Activated T-helper 1 cell treated with anti-CD3 and anti-CD28 coated beads, Interleukin-12 subunit alpha, Interleukin-12 subunit beta, Interleukin-2, Interleukin-4 antibody, amounts not matched to agents 30 ng/mL and 10 ng/mL and 1 ng/mL, durations not matched to agents 14 hours and 24 hours and 36 hours (primary cell): ENCODE measurements at regions of chr5 and their contacts with region 1.

Region 1: GRCh38 chr5:132426525-132427138 is 57.1 kb downstream of the SLC22A5 start:
- DNase-seq: peak; percentile 67
- H3K4me3 Mint-ChIP-seq: peak overlapping the region; percentile 72
- H3K27ac Mint-ChIP-seq: peak overlapping the region; percentile 98
- H3K4me1 Mint-ChIP-seq: peaks cover 97% of the 10 kb centered on the region
- H3K27me3 Mint-ChIP-seq: no peaks in the 10 kb centered on the region

Region 2: DNA sequence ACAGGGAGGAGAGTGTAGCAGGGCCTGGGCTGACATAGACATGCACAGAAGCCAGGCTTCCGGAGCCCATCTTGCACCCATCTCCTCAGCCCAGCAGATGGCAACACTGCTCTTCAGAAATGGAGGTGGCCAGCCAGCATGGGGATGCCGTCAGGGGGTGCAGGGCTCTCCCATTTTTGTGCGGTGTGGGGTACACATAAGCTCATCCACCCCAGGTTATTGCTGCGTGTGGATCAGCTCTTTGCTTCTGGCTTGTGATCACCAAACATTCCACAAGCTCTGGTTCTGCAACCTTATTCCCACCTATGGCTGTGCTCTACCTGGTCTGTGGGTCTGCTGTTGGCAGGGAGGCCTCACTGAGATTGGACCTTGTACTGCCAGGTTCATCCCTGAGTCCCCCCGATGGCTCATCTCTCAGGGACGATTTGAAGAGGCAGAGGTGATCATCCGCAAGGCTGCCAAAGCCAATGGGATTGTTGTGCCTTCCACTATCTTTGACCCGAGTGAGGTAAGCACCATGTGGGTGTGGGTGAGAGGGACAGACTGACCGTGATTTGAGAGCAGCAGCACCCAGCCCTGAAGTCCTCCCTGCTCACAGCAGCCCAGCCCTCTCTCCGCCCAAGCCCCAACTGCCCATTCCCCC is 39.9 kb before region 1 on chr5:
- intact Hi-C with region 1: no loop called
- DNase-seq: peak; percentile 72
- H3K4me3 Mint-ChIP-seq: no peak overlapping the region
- H3K27ac Mint-ChIP-seq: peak overlapping the region; percentile 54
- H3K4me1 Mint-ChIP-seq: peaks cover 61% of the 10 kb centered on the region
- H3K27me3 Mint-ChIP-seq: peaks cover 3% of the 10 kb centered on the region

Region 3: GRCh38 chr5:132410451-132411381 is 15.9 kb before region 1 on chr5:
- intact Hi-C with region 1: loop called (anchors 1 kb)
- DNase-seq: peak; percentile 90
- H3K4me3 Mint-ChIP-seq: peak overlapping the region; percentile 99
- H3K27ac Mint-ChIP-seq: peak overlapping the region; percentile 100
- H3K4me1 Mint-ChIP-seq: peaks cover 81% of the 10 kb centered on the region
- H3K27me3 Mint-ChIP-seq: no peaks in the 10 kb centered on the region

Region 4: DNA sequence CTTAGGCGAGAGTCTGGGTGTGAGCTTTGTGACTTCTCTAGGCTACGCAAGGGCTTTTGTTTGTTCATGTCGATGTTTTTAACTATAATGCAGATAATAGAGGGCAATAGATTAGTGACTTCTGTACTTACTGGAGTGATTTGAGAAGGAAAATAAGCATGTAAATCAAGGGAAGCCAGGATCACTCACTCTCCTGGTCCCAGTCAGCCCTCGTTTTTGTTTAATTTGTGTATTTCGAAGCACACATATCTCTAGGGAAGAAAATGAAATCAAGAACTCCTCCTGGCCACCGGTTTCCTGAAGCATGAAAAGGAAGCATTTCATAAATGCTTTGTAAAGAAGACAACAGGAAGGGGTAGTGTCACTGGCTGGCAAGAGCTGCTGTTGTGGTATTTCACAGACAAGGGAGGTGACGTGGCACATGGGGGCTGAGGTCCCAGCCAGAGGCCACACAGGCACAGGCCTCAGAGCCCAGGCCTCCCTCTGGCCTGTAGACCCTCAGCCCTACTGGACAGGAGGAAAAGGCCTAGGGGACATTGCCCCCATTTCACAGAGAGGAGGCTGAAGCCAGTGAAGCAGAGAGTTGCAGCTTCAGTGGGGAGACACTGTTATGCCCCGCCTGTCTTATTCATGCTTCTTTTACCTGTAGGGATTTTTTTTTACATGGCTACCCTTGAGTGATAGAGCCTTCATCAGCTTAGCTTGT is 29.8 kb after region 1 on chr5:
- intact Hi-C with region 1: loop called (anchors 1 kb)
- DNase-seq: peak; percentile 63
- H3K4me3 Mint-ChIP-seq: peak overlapping the region; percentile 69
- H3K27ac Mint-ChIP-seq: peak overlapping the region; percentile 99
- H3K4me1 Mint-ChIP-seq: peaks cover 94% of the 10 kb centered on the region
- H3K27me3 Mint-ChIP-seq: no peaks in the 10 kb centered on the region

Region 5: DNA sequence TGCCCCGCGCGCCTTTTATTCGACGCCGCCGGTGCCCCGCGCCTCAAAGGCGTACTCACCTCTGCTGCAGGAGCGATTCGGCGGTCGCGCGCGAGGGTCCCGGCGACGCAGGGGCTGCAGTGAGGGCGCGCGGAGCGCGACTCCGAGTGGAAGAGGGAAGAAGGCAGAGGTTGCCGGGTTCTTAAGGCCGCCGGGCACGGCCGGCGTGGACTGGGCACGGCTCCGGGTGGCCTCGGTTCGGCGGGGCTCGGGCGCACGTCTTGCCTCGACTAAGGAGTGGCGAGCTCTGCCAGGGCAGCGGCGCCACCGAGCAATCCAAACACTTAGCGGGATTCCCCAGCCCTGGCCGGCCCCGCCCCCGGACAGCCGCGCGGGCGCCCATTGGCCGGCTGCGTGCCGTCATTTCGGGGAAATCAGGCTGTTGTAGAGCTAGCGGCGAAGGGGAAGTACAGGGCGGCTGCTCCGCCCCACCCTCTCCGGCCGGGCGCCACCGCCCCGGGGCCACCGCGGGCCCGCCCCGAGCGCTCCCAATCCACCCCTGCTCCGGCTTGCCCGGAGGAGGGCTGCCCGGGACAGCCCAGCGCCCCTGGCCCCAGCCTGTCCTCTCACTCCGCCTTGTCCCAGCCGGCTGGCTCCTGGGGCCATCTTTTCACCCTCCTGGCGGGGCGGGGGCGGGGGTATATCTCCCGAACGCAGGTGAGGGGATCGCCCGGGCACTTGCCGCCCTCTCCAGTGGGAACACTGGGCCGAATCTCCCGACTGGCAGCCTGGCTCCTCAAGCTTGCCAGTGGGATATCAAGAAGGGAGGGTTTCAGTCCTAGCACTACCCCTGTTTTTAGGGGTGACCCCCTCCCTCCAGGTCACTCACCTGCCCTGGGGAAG is 64.1 kb after region 1 on chr5 and contains the start of gene IRF1:
- intact Hi-C with region 1: loop called (anchors 1 kb)
- DNase-seq: peak; percentile 99
- H3K4me3 Mint-ChIP-seq: peak within 1 kb of the TSS; percentile 99
- H3K27ac Mint-ChIP-seq: peak within 1 kb of the TSS; percentile 95
- H3K4me1 Mint-ChIP-seq: peaks cover 76% of the 10 kb centered on the region
- H3K27me3 Mint-ChIP-seq: no peaks in the 10 kb centered on the region
- total RNA-seq, gene IRF1: 190 and 198 TPM in 2 replicates

Region 6: DNA sequence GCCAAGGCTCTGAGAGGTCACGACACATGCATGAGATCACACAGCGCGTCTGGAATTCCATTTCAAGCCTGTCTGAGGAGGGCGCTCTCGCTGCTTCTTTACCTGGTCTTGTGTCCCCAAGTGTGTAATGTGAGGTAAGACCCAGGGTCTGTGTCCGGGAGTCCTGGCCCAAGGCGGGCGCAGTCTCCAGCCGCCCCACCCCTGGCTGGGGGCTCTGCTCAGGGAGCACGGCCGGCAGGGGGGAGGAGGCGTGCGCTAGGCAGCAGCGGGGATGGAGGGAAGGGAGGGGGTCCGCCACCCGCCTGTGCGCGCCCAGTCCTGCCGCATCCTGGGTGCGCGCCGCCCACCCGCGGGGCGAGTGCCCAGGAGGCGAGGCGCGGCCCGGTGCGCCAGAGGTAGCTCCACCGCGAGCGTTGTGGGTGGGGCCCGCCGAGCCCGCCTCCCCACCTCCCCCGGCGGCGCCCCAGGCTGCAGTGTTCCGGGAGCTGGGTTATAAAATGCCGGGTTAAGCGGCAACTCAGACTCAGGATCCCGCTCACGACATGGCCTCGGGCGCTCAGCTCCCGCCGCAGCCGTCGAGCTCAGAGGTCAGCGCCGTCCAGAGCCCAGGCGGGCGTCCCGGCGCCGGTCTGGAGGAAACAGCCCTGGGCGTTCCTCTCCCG is 320.5 kb after region 1 on chr5 and contains the start of gene CCNI2:
- intact Hi-C with region 1: loop called (anchors 2 kb)
- DNase-seq: peak; percentile 65
- H3K4me3 Mint-ChIP-seq: peak within 1 kb of the TSS; percentile 82
- H3K27ac Mint-ChIP-seq: peak within 1 kb of the TSS; percentile 86
- H3K4me1 Mint-ChIP-seq: peaks cover 45% of the 10 kb centered on the region
- H3K27me3 Mint-ChIP-seq: peaks cover 20% of the 10 kb centered on the region
- total RNA-seq, gene CCNI2: 52.5 and 55.6 TPM in 2 replicates